ENCODE measurements at regions of chr17 and their contacts with region 1.

Region 1: GRCh38 chr17:37570527-37571093 is 38.6 kb downstream of the SYNRG start:
- DNase-seq: peak; percentile 75
- ATAC-seq: peak; percentile 99
- H3K4me3 Mint-ChIP-seq: no peak overlapping the region
- H3K27ac Mint-ChIP-seq: peak overlapping the region; percentile 76; the same call in 1 of the 2 replicates
- H3K4me1 Mint-ChIP-seq: no peaks in the 10 kb centered on the region
- H3K27me3 Mint-ChIP-seq: no peaks in the 10 kb centered on the region
- CTCF ChIP-seq: peak; percentile 44; the same call in 1 of the 2 replicates

Region 2: GRCh38 chr17:37527249-37527851 is 43.3 kb before region 1 on chr17:
- CTCF ChIA-PET with region 1: interaction called, 21 read pairs
- POLR2A ChIA-PET with region 1: interaction called, 7 read pairs
- DNase-seq: no peak
- ATAC-seq: peak; percentile 92
- H3K4me3 Mint-ChIP-seq: no peak overlapping the region
- H3K27ac Mint-ChIP-seq: peak overlapping the region; percentile 26; the same call in 1 of the 2 replicates
- H3K4me1 Mint-ChIP-seq: no peaks in the 10 kb centered on the region
- H3K27me3 Mint-ChIP-seq: no peaks in the 10 kb centered on the region; the same call in 1 of the 2 replicates
- CTCF ChIP-seq: peak; percentile 47

Region 3: GRCh38 chr17:37609170-37610040 is 38.8 kb after region 1 on chr17 and contains the start of gene SYNRG:
- CTCF ChIA-PET with region 1: interaction called, 13 read pairs
- POLR2A ChIA-PET with region 1: no interaction called
- DNase-seq: peak; percentile 97
- ATAC-seq: peak; percentile 91
- H3K4me3 Mint-ChIP-seq: peak within 1 kb of the TSS; percentile 91
- H3K27ac Mint-ChIP-seq: peak within 1 kb of the TSS; percentile 97
- H3K4me1 Mint-ChIP-seq: peaks cover 24% of the 10 kb centered on the region
- H3K27me3 Mint-ChIP-seq: no peaks in the 10 kb centered on the region
- CTCF ChIP-seq: no peak
- total RNA-seq, gene SYNRG: 28.6 to 31.3 TPM (median 30.0 TPM) in 3 replicates

Region 4: DNA sequence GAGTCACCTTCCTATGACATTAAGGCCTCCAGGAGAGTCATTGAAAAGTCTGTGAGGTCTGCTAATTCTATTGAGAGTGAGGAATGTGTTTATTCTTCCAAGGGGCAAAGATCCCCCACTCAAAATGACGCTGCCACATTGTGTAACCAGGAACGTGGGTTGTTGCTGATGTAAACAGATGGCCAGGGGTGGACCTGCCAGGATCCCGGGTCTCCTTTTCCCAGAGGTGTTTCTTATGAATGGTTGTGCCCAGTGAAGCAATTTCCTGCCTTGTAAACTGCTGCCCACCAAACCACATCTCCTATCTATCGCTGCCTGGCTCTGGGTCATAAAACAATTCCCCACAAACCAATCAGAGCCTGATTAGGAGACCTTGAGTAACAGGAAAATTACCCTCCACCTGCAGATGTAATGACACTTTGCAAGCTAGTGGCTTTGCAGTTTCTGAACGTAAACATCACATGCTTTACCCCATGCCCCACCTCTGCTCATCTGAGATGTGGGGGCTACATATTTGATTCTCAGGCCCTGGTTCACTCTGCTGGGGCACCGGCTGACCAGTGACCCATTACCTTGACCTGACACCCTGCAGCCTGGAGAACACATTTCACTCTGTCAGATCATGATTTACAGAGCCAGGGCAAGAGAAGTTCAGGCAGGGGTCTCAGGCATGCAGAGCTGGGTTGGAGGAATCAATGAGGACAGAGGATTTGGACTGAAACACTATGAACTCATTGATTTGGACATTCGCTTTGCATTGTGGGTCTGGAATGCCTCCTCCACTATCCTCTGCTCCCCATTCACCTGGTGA is 105.7 kb after region 1 on chr17:
- CTCF ChIA-PET with region 1: no interaction called
- POLR2A ChIA-PET with region 1: no interaction called
- DNase-seq: no peak
- ATAC-seq: no peak
- H3K4me3 Mint-ChIP-seq: no peak overlapping the region
- H3K27ac Mint-ChIP-seq: no peak overlapping the region
- H3K4me1 Mint-ChIP-seq: no peaks in the 10 kb centered on the region
- H3K27me3 Mint-ChIP-seq: peaks cover 7% of the 10 kb centered on the region
- CTCF ChIP-seq: no peak

Region 5: GRCh38 chr17:37752482-37752881 is 181.9 kb after region 1 on chr17:
- CTCF ChIA-PET with region 1: no interaction called
- POLR2A ChIA-PET with region 1: no interaction called
- DNase-seq: no peak
- ATAC-seq: no peak
- H3K4me3 Mint-ChIP-seq: no peak overlapping the region
- H3K27ac Mint-ChIP-seq: no peak overlapping the region
- H3K4me1 Mint-ChIP-seq: no peaks in the 10 kb centered on the region
- H3K27me3 Mint-ChIP-seq: peaks cover 27% of the 10 kb centered on the region
- CTCF ChIP-seq: no peak

Measured in WTC11 (cell line).